ENCODE measurements at regions of chr18 and their contacts with region 1.

Region 1: GRCh38 chr18:58349650-58350049 is 279.2 kb downstream of the ALPK2 start:
- DNase-seq: no peak
- H3K4me3 ChIP-seq: no peak overlapping the region
- H3K27ac ChIP-seq: no peak overlapping the region
- H3K4me1 ChIP-seq: peaks cover 5 to 19% (median 13%) of the 10 kb centered on the region in 4 experiments
- H3K27me3 ChIP-seq: no peaks in the 10 kb centered on the region
- CTCF ChIP-seq: no peak
- EP300 ChIP-seq: no peak
- POLR2A ChIP-seq: no peak
- RAD21 ChIP-seq: no peak

Region 2: DNA sequence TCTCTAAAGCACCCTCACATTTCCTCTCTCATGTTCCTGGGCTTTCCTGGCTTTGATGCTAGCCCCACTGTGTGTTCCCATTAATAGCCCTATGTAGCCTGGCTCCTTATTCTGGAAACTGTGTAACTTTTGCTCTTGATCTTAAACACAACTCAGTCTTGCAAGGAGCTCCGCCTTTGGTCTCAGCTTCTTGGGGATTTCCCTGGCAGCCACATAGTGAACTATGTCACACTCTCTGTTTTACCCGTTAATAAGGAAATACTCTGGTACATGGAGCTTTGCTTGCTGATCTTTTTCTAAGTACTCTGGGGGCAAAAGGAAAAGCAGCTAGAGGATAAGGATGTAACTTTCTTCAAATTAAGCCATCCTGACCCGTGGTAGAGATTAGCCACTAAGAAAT is 46.3 kb before region 1 on chr18:
- CTCF ChIA-PET with region 1: no interaction called
- POLR2A ChIA-PET with region 1: no interaction called
- DNase-seq: no peak
- H3K4me3 ChIP-seq: no peak overlapping the region
- H3K27ac ChIP-seq: no peak overlapping the region
- H3K4me1 ChIP-seq: no peaks in the 10 kb centered on the region
- H3K27me3 ChIP-seq: no peaks in the 10 kb centered on the region
- CTCF ChIP-seq: no peak
- EP300 ChIP-seq: no peak
- POLR2A ChIP-seq: no peak
- RAD21 ChIP-seq: no peak

Region 3: DNA sequence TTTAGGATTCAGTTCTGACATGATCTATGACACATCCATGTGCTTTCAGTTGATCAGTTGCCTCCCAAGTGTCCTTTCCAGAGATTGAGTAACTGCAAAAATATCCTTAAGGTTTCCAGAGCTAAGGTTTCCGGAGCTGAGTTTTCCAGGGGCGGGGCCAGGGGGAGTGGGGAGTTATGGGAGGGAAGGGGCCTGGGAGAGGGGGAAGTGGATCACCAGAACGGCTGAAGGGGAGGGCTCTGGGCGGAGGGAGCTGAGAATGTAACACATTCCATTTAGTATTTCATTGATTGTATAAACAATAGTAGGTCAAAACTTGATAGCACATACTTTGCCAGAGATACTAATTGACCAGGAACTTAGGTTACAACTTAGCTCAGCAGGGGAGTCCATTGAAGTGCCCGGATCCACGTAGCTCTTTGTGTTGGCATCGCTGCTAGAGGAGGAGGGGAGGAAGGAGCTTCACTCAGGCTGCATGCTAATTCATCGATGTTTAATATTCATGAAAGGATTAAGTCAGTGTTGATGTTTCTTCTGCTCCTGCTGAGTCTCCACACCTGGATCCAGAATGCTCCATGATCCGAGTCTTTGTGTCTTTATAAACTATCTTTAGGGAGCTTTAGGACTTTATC is 10.6 kb before region 1 on chr18:
- CTCF ChIA-PET with region 1: interaction called, 11 read pairs
- POLR2A ChIA-PET with region 1: interaction called, 3 read pairs
- DNase-seq: peak; percentile 29 to 61
- H3K4me3 ChIP-seq: peak overlapping the region in 2 of 4 experiments; percentile 1 to 51; a peak in 3 of 8 replicates
- H3K27ac ChIP-seq: no peak overlapping the region; the same call in 1 of the 2 replicates
- H3K4me1 ChIP-seq: peaks cover 12 to 51% (median 37%) of the 10 kb centered on the region in 4 experiments
- H3K27me3 ChIP-seq: no peaks in the 10 kb centered on the region
- CTCF ChIP-seq: no peak
- EP300 ChIP-seq: no peak
- POLR2A ChIP-seq: no peak
- RAD21 ChIP-seq: no peak

Region 4: GRCh38 chr18:58407649-58408407 is 58.2 kb after region 1 on chr18:
- CTCF ChIA-PET with region 1: no interaction called
- POLR2A ChIA-PET with region 1: no interaction called
- DNase-seq: no peak
- H3K4me3 ChIP-seq: no peak overlapping the region
- H3K27ac ChIP-seq: no peak overlapping the region
- H3K4me1 ChIP-seq: peaks cover 0 to 3% (median 1%) of the 10 kb centered on the region in 4 experiments; a peak in 5 of 7 replicates
- H3K27me3 ChIP-seq: no peaks in the 10 kb centered on the region
- CTCF ChIP-seq: peak; percentile 1 to 28 (median 15); a peak in 3 of 4 replicates
- EP300 ChIP-seq: no peak
- POLR2A ChIP-seq: no peak
- RAD21 ChIP-seq: peak in 1 of 2 experiments; percentile 31; a peak in 1 of 4 replicates

Measured in H1 (cell line).